Naive thymus-derived CD4-positive, alpha-beta T cell (primary cell): ENCODE measurements at regions of chr9 and their contacts with region 1.

Region 1: DNA sequence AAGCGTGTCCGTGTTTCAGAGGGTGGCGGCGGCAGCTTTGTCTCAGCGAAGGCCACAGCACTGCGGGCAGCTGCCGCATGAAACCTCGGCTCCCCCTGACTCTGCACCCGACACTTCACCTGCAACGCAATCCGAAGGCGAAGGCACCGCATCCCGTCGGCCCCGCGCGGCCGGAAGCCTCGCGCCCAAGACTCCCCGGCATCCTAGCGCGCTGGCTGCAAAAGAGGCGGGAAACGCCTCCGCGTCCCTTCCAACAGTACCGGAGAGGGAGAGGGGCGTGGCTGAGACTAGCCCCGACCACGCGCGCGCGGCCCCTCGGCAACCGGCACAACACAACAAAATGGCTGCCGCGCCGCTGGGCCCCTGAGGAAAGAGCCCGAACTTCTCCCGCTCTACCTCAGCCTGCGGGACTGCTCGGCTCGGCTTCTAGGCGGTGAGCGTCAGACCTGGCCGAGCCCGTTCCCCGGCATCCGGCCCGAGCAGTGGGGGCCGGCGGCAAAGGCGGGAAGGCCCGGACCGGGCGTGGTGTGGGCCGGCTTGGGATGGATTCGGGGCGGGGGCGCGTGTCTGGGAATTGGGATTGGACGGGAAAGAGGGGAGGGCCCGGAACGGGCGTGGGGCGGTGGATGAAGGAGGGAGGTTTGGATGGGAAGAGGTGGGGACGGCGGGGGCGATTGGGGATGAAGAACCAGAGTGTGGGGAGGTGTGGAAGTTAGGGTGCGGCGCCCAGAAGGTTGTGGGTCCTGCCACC is at the start of gene CNTRL:
- DNase-seq: peak; percentile 63 to 92 (median 81)
- ATAC-seq: peak; percentile 90
- H3K4me3 ChIP-seq: peak within 1 kb of the TSS; percentile 90
- H3K4me3 Mint-ChIP-seq: peak within 1 kb of the TSS; percentile 87 to 100 (median 99)
- H3K27ac ChIP-seq: peak within 1 kb of the TSS; percentile 92
- H3K27ac Mint-ChIP-seq: peak within 1 kb of the TSS; percentile 80 to 99 (median 93)
- H3K4me1 ChIP-seq: peaks cover 22 to 24% of the 10 kb centered on the region in 2 donors
- H3K4me1 Mint-ChIP-seq: peaks cover 27 to 65% (median 50%) of the 10 kb centered on the region in 7 donors
- H3K27me3 ChIP-seq: no peaks in the 10 kb centered on the region
- H3K27me3 Mint-ChIP-seq: no peaks in the 10 kb centered on the region
- total RNA-seq, gene CNTRL: 74.5 to 131 (median 88.6) TPM

Region 2: GRCh38 chr9:120619751-120620655 is 454.8 kb before region 1 on chr9:
- CTCF ChIA-PET with region 1: no interaction called
- POLR2A ChIA-PET with region 1: no interaction called
- intact Hi-C with region 1: loop called in 1 of 2 experiments (anchors 1 kb)
- DNase-seq: peak in 8 of 9 donors; percentile 22 to 59 (median 52)
- ATAC-seq: peak; percentile 94
- H3K4me3 ChIP-seq: no peak overlapping the region
- H3K4me3 Mint-ChIP-seq: no peak overlapping the region
- H3K27ac ChIP-seq: no peak overlapping the region
- H3K27ac Mint-ChIP-seq: no peak overlapping the region
- H3K4me1 ChIP-seq: peaks cover 0 to 3% of the 10 kb centered on the region in 2 donors
- H3K4me1 Mint-ChIP-seq: peaks cover 3 to 10% (median 7%) of the 10 kb centered on the region in 7 donors
- H3K27me3 ChIP-seq: no peaks in the 10 kb centered on the region
- H3K27me3 Mint-ChIP-seq: no peaks in the 10 kb centered on the region

Region 3: GRCh38 chr9:120755827-120756434 is 318.9 kb before region 1 on chr9:
- CTCF ChIA-PET with region 1: interaction called, 13 read pairs
- POLR2A ChIA-PET with region 1: interaction called, 3 read pairs
- intact Hi-C with region 1: loop called in 1 of 2 experiments (anchors 1 kb)
- DNase-seq: peak; percentile 42 to 80 (median 65)
- ATAC-seq: peak; percentile 83
- H3K4me3 ChIP-seq: no peak overlapping the region
- H3K4me3 Mint-ChIP-seq: no peak overlapping the region
- H3K27ac ChIP-seq: peak overlapping the region; percentile 22
- H3K27ac Mint-ChIP-seq: peak overlapping the region in 8 of 9 donors; percentile 5 to 77 (median 42)
- H3K4me1 ChIP-seq: no peaks in the 10 kb centered on the region
- H3K4me1 Mint-ChIP-seq: peaks cover 3 to 16% (median 7%) of the 10 kb centered on the region in 7 donors
- H3K27me3 ChIP-seq: no peaks in the 10 kb centered on the region
- H3K27me3 Mint-ChIP-seq: no peaks in the 10 kb centered on the region

Region 4: GRCh38 chr9:120875954-120876841 is 198.6 kb before region 1 on chr9:
- CTCF ChIA-PET with region 1: interaction called, 4 read pairs
- POLR2A ChIA-PET with region 1: no interaction called
- intact Hi-C with region 1: loop called in 1 of 2 experiments (anchors 2 kb)
- DNase-seq: peak; percentile 50 to 91 (median 56)
- ATAC-seq: peak; percentile 64
- H3K4me3 ChIP-seq: peak overlapping the region; percentile 66
- H3K4me3 Mint-ChIP-seq: peak overlapping the region; percentile 81 to 95 (median 85)
- H3K27ac ChIP-seq: peak overlapping the region; percentile 88
- H3K27ac Mint-ChIP-seq: peak overlapping the region; percentile 76 to 97 (median 90)
- H3K4me1 ChIP-seq: peaks cover 31 to 39% of the 10 kb centered on the region in 2 donors
- H3K4me1 Mint-ChIP-seq: peaks cover 38 to 78% (median 69%) of the 10 kb centered on the region in 7 donors
- H3K27me3 ChIP-seq: no peaks in the 10 kb centered on the region
- H3K27me3 Mint-ChIP-seq: no peaks in the 10 kb centered on the region

Region 5: GRCh38 chr9:120982836-120983235 is 92.0 kb before region 1 on chr9:
- CTCF ChIA-PET with region 1: interaction called, 4 read pairs
- POLR2A ChIA-PET with region 1: no interaction called
- intact Hi-C with region 1: loop called (anchors 1 to 2 kb)
- DNase-seq: no peak
- ATAC-seq: no peak
- H3K4me3 ChIP-seq: no peak overlapping the region
- H3K4me3 Mint-ChIP-seq: no peak overlapping the region
- H3K27ac ChIP-seq: no peak overlapping the region
- H3K27ac Mint-ChIP-seq: no peak overlapping the region
- H3K4me1 ChIP-seq: no peaks in the 10 kb centered on the region
- H3K4me1 Mint-ChIP-seq: peaks cover 0 to 10% (median 4%) of the 10 kb centered on the region in 7 donors
- H3K27me3 ChIP-seq: no peaks in the 10 kb centered on the region
- H3K27me3 Mint-ChIP-seq: peaks cover 0 to 30% (median 0%) of the 10 kb centered on the region in 5 donors

Region 6: GRCh38 chr9:121098567-121099198 is 23.9 kb after region 1 on chr9:
- CTCF ChIA-PET with region 1: no interaction called
- POLR2A ChIA-PET with region 1: no interaction called
- intact Hi-C with region 1: no loop called
- DNase-seq: no peak
- ATAC-seq: no peak
- H3K4me3 ChIP-seq: no peak overlapping the region
- H3K4me3 Mint-ChIP-seq: no peak overlapping the region
- H3K27ac ChIP-seq: no peak overlapping the region
- H3K27ac Mint-ChIP-seq: peak overlapping the region in 2 of 9 donors; percentile 29 to 82
- H3K4me1 ChIP-seq: no peaks in the 10 kb centered on the region
- H3K4me1 Mint-ChIP-seq: peaks cover 0 to 7% (median 0%) of the 10 kb centered on the region in 7 donors
- H3K27me3 ChIP-seq: no peaks in the 10 kb centered on the region
- H3K27me3 Mint-ChIP-seq: no peaks in the 10 kb centered on the region

Region 7: DNA sequence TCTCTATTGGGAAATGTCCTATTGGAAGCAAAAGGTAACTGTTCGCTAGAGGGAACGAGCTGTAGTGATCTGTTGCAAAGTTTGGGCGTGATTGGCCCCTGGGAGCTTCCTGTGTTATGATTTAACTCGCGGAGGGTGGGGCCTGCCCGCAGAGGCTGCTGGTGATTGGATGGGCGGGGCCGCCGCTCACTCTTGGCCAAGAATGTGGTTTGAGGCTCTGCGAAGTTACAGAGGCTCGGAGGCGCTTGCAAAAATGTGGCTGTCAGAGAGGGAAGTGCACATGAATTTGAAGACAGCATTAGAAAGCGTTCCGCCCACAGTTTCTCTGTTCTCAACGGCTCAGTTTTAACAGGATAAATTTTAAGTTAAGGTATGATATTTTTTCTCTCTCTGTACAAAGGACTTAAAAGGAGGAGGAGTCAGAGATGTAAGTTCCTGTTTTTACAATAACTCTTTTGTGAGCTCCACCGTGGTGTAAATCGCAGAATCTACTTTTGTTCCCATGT is 46.8 kb after region 1 on chr9:
- CTCF ChIA-PET with region 1: interaction called, 3 read pairs
- POLR2A ChIA-PET with region 1: interaction called, 5 read pairs
- intact Hi-C with region 1: loop called (anchors 1 kb)
- DNase-seq: peak; percentile 83 to 98 (median 97)
- ATAC-seq: peak; percentile 100
- H3K4me3 ChIP-seq: peak overlapping the region; percentile 87
- H3K4me3 Mint-ChIP-seq: peak overlapping the region; percentile 87 to 96 (median 89)
- H3K27ac ChIP-seq: peak overlapping the region; percentile 88
- H3K27ac Mint-ChIP-seq: peak overlapping the region; percentile 87 to 99 (median 93)
- H3K4me1 ChIP-seq: peaks cover 20 to 26% of the 10 kb centered on the region in 2 donors
- H3K4me1 Mint-ChIP-seq: peaks cover 27 to 63% (median 54%) of the 10 kb centered on the region in 7 donors
- H3K27me3 ChIP-seq: no peaks in the 10 kb centered on the region
- H3K27me3 Mint-ChIP-seq: no peaks in the 10 kb centered on the region